ENCODE measurements at regions of chr5 and their contacts with region 1.

Region 1: GRCh38 chr5:140547508-140548299 is at the start of gene EIF4EBP3:
- DNase-seq: peak; percentile 97
- H3K4me3 ChIP-seq: peak within 1 kb of the TSS; percentile 56
- H3K27ac ChIP-seq: peak within 1 kb of the TSS; percentile 96 to 99
- H3K4me1 ChIP-seq: peaks cover 34% of the 10 kb centered on the region
- H3K27me3 ChIP-seq: no peaks in the 10 kb centered on the region
- CTCF ChIP-seq: peak; percentile 38 to 80 (median 74)
- POLR2A ChIP-seq: no peak
- total RNA-seq, gene EIF4EBP3: 11.7 to 14.0 TPM

Region 2: DNA sequence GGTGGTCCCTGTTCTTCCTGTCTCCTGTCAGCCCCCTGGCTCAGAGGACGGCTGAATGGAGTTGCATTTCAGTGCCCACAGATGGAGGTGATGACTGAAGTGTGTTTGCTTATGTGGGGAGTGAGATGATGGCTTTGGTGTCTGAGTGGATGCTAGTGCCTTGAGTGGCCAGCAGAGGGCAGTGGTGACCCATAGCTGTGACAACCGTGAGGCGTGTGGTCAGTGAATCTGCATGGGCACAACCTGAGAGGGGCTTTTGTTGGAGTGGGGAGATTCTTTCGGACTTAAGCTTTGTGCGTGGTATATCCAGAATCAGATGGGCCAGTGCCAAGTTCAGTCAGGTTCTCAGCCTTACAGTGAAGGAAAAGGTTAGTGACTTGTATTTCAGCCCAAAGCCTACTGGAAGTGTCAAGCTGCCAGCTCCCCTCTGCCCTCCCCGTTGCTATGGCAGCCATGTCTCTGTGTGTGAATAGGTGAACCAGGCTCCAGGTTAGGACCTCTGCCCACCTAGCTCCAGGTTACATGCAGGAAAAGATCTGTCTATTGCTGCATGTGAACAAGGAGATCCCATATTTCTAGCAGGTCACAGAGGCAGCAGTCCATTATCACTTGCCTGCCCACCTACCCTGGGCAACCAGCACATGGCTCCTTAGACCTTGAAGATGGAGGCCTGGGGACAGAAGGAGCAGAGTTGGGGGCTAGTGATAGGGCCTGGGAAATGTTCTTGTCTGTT is 914.2 kb before region 1 on chr5:
- intact Hi-C with region 1: no loop called
- DNase-seq: peak; percentile 76
- H3K4me3 ChIP-seq: no peak overlapping the region
- H3K27ac ChIP-seq: no peak overlapping the region
- H3K4me1 ChIP-seq: peaks cover 48% of the 10 kb centered on the region
- H3K27me3 ChIP-seq: no peaks in the 10 kb centered on the region
- CTCF ChIP-seq: peak; percentile 93 to 96 (median 95)
- POLR2A ChIP-seq: no peak

Region 3: GRCh38 chr5:140381972-140382371 is 165.7 kb before region 1 on chr5:
- intact Hi-C with region 1: no loop called
- DNase-seq: no peak
- H3K4me3 ChIP-seq: no peak overlapping the region
- H3K27ac ChIP-seq: no peak overlapping the region
- H3K4me1 ChIP-seq: no peaks in the 10 kb centered on the region
- H3K27me3 ChIP-seq: no peaks in the 10 kb centered on the region
- CTCF ChIP-seq: no peak
- POLR2A ChIP-seq: no peak

Region 4: GRCh38 chr5:140639148-140639979 is 91.7 kb after region 1 on chr5 and contains the start of gene TMCO6:
- intact Hi-C with region 1: loop called (anchors 10 kb)
- DNase-seq: peak; percentile 99
- H3K4me3 ChIP-seq: peak within 1 kb of the TSS; percentile 65 to 86
- H3K27ac ChIP-seq: peak within 1 kb of the TSS; percentile 79 to 87
- H3K4me1 ChIP-seq: peaks cover 8% of the 10 kb centered on the region
- H3K27me3 ChIP-seq: no peaks in the 10 kb centered on the region
- CTCF ChIP-seq: peak; percentile 44 to 63 (median 60)
- POLR2A ChIP-seq: no peak
- total RNA-seq, gene TMCO6: 58.0 to 103 TPM

Measured in testis (tissue), 5 donors.